Panc1 (cell line): ENCODE measurements at regions of chr12 and their contacts with region 1.

Region 1: DNA sequence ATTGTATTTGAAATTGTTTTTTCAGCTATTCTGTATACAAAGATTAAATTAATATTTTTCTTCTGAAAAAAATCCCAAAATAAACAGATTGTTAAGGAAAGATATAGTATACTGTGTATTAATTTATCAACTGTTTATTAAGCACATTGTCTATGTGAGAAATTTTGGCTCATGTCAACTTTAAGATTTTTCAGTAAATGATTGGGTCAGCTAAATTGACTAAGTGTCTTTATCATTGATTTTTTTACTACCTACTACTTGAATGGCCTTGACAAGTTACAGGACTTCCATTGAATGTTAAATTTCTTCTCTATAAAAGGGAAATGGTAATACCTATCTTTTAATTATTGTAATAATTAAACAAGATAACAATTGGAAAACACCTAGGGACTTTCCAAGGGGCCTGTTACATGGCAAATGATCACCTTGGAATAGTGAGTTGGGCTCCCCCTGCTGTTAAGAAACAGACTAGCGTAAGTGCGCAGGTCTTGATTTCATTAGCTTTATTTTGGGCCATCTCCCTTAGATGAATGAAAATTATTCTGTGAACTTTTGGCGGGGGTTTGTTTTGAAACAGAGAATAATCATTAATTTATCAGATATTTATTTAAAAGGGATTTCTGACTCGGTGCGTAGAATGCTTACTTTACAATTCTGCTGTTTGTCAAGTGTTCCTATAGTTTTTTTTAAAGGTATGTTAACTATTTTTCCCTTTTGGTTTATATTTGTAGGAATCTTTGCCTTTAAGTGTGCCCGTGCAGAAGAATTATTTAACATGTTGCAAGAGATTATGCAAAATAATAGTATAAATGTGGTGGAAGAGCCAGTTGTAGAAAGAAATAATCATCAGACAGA is 14.5 kb upstream of the CCT2 start:
- DNase-seq: no peak
- ATAC-seq: peak; percentile 88
- H3K4me3 ChIP-seq: no peak overlapping the region
- H3K27ac ChIP-seq: no peak overlapping the region
- H3K4me1 ChIP-seq: no peaks in the 10 kb centered on the region
- H3K27me3 ChIP-seq: no peaks in the 10 kb centered on the region
- CTCF ChIP-seq: peak; percentile 83; the same call in 1 of the 2 replicates

Region 2: GRCh38 chr12:69388371-69388770 is 182.4 kb before region 1 on chr12:
- CTCF ChIA-PET with region 1: no interaction called
- POLR2A ChIA-PET with region 1: no interaction called
- in situ Hi-C with region 1: no loop called
- intact Hi-C with region 1: loop called (anchors 5 kb)
- DNase-seq: no peak
- ATAC-seq: peak; percentile 80
- H3K4me3 ChIP-seq: no peak overlapping the region
- H3K27ac ChIP-seq: no peak overlapping the region
- H3K4me1 ChIP-seq: no peaks in the 10 kb centered on the region
- H3K27me3 ChIP-seq: no peaks in the 10 kb centered on the region
- CTCF ChIP-seq: peak; percentile 61; the same call in 1 of the 2 replicates

Region 3: GRCh38 chr12:69405466-69405865 is 165.3 kb before region 1 on chr12:
- CTCF ChIA-PET with region 1: no interaction called
- POLR2A ChIA-PET with region 1: no interaction called
- in situ Hi-C with region 1: no loop called
- intact Hi-C with region 1: no loop called
- DNase-seq: peak; percentile 72
- ATAC-seq: peak; percentile 99
- H3K4me3 ChIP-seq: no peak overlapping the region
- H3K27ac ChIP-seq: no peak overlapping the region
- H3K4me1 ChIP-seq: 0 out of 2 replicates have a peak, but pooled peaks cover 8% of the 10 kb centered on the region
- H3K27me3 ChIP-seq: no peaks in the 10 kb centered on the region
- CTCF ChIP-seq: no peak

Region 4: GRCh38 chr12:69470189-69471075 is 100.3 kb before region 1 on chr12 and contains the start of gene FRS2:
- CTCF ChIA-PET with region 1: interaction called, 10 read pairs
- POLR2A ChIA-PET with region 1: no interaction called
- in situ Hi-C with region 1: loop called (anchors 25 kb)
- intact Hi-C with region 1: loop called (anchors 2 kb)
- DNase-seq: peak; percentile 38
- ATAC-seq: peak; percentile 99
- H3K4me3 ChIP-seq: peak within 1 kb of the TSS; percentile 80 to 94
- H3K27ac ChIP-seq: peak within 1 kb of the TSS; percentile 99
- H3K4me1 ChIP-seq: peaks cover 38% of the 10 kb centered on the region
- H3K27me3 ChIP-seq: no peaks in the 10 kb centered on the region
- CTCF ChIP-seq: peak; percentile 62; the same call in 1 of the 2 replicates
- total RNA-seq, gene FRS2: 26.6 TPM

Region 5: GRCh38 chr12:69610729-69611128 is 40.0 kb after region 1 on chr12 and contains the start of gene LRRC10:
- CTCF ChIA-PET with region 1: interaction called, 10 read pairs
- POLR2A ChIA-PET with region 1: no interaction called
- in situ Hi-C with region 1: no loop called
- intact Hi-C with region 1: no loop called
- DNase-seq: no peak
- ATAC-seq: no peak
- H3K4me3 ChIP-seq: no peak within 1 kb of the TSS
- H3K27ac ChIP-seq: no peak within 1 kb of the TSS
- H3K4me1 ChIP-seq: no peaks in the 10 kb centered on the region
- H3K27me3 ChIP-seq: 0 out of 2 replicates have a peak, but pooled peaks cover 4% of the 10 kb centered on the region
- CTCF ChIP-seq: no peak
- total RNA-seq, gene LRRC10: not detected

Region 6: GRCh38 chr12:70002097-70002911 is 431.5 kb after region 1 on chr12:
- CTCF ChIA-PET with region 1: no interaction called
- POLR2A ChIA-PET with region 1: no interaction called
- in situ Hi-C with region 1: no loop called
- intact Hi-C with region 1: no loop called
- DNase-seq: no peak
- ATAC-seq: no peak
- H3K4me3 ChIP-seq: no peak overlapping the region
- H3K27ac ChIP-seq: no peak overlapping the region
- H3K4me1 ChIP-seq: no peaks in the 10 kb centered on the region
- H3K27me3 ChIP-seq: no peaks in the 10 kb centered on the region
- CTCF ChIP-seq: no peak